ENCODE measurements at regions of chr4 and their contacts with region 1.

Region 1: GRCh38 chr4:39977489-39978377 is at the start of gene PDS5A:
- DNase-seq: peak; percentile 99
- H3K4me3 ChIP-seq: peak within 1 kb of the TSS; percentile 81 to 97 (median 90)
- H3K27ac ChIP-seq: peak within 1 kb of the TSS; percentile 88 to 98 (median 96)
- H3K4me1 ChIP-seq: peaks cover 15 to 48% (median 42%) of the 10 kb centered on the region in 6 donors
- H3K27me3 ChIP-seq: no peaks in the 10 kb centered on the region
- CTCF ChIP-seq: peak; percentile 78 to 97 (median 95)
- POLR2A ChIP-seq: peak in 1 of 3 donors; percentile 52
- total RNA-seq, gene PDS5A: 63.5 to 90.7 (median 81.2) TPM

Region 2: GRCh38 chr4:39469429-39470077 is 508.2 kb before region 1 on chr4:
- intact Hi-C with region 1: loop called (anchors 5 kb)
- DNase-seq: no peak
- H3K4me3 ChIP-seq: no peak overlapping the region
- H3K27ac ChIP-seq: peak overlapping the region in 7 of 8 donors; percentile 3 to 64 (median 51)
- H3K4me1 ChIP-seq: peaks cover 0 to 13% (median 8%) of the 10 kb centered on the region in 6 donors
- H3K27me3 ChIP-seq: no peaks in the 10 kb centered on the region
- CTCF ChIP-seq: peak; percentile 61 to 87 (median 82)
- POLR2A ChIP-seq: no peak

Region 3: DNA sequence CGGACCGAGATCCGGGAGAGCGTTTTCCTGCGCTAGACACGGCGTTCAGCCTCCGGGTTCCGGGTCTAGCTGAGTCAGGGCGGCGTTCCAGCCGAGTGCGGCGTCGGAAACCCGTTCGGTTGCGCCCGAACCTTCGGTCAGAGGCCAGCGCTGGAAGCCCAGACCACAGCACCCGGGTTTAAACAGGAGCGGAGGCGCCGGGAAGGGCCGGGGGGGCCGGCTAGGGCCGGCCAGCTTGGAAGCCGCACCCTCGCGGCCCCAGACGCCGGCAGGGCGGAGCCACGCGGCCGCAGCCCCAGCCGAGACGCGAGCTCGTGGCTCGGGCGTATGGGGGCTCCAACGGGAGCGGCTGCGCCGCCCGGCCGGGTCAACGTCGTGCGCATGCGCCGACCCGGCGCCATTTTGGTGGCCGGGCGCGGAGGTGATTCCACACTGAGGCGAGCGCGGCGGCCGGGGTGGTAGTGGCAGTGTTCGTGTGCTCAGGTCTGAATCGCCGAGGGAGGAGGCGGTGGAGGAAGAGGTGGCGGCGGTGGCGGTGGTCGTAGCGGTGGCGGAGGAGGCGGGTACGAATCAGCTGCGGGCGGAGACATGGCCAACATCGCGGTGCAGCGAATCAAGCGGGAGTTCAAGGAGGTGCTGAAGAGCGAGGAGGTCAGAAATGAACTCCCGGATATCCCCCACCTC is 279.9 kb before region 1 on chr4 and contains the start of gene UBE2K:
- intact Hi-C with region 1: loop called (anchors 5 kb)
- DNase-seq: peak; percentile 97
- H3K4me3 ChIP-seq: peak within 1 kb of the TSS; percentile 80 to 92 (median 84)
- H3K27ac ChIP-seq: peak within 1 kb of the TSS; percentile 85 to 99 (median 94)
- H3K4me1 ChIP-seq: peaks cover 27 to 65% (median 50%) of the 10 kb centered on the region in 6 donors
- H3K27me3 ChIP-seq: no peaks in the 10 kb centered on the region
- CTCF ChIP-seq: peak in 3 of 11 experiments; percentile 9 to 32 (median 22)
- POLR2A ChIP-seq: peak in 2 of 3 donors; percentile 15 to 26
- total RNA-seq, gene UBE2K: 22.7 to 48.8 (median 40.1) TPM

Region 4: DNA sequence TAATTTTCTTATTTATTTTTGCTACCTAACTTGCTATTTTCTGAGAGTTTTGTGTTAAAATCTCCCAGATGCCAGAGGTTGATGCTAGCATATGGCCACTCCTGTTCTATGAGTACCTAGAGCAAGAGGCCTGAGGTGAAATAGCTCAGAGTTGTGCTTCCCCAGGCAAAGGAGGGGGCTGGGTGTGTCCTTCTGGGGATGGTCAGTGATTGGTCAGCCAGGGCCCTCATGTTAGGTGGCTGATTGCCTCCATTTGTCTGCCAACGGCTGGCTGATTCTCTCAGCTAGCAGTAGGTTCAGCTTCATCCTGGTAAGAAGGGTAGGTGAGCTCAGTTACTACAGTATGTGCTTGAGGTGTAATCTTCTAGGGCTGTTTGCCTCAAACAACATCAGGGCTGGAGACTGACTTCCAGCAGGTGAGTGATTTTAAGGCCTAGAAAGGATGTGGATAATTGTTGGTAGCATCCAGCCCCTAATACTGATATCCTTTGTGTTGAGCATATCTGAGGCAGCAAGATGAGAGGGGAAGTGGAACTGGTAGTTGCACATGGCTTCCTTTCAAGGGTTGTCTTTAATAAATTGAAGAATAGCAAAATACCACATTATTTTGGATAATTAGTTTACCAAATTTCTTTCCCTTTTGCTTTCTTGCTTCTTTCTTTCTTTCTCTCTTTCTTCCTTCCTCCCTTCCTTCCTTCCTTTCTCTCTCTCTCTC is 156.6 kb after region 1 on chr4:
- intact Hi-C with region 1: no loop called
- DNase-seq: no peak
- H3K4me3 ChIP-seq: no peak overlapping the region
- H3K27ac ChIP-seq: no peak overlapping the region
- H3K4me1 ChIP-seq: no peaks in the 10 kb centered on the region
- H3K27me3 ChIP-seq: no peaks in the 10 kb centered on the region
- CTCF ChIP-seq: no peak
- POLR2A ChIP-seq: no peak